ENCODE measurements at regions of chr12 and their contacts with region 1.

Region 1: GRCh38 chr12:128259556-128260070 is 7.4 kb upstream of the TMEM132C start:
- DNase-seq: peak in 1 of 2 experiments; percentile 72
- H3K4me3 ChIP-seq: no peak overlapping the region
- H3K27ac ChIP-seq: no peak overlapping the region
- H3K4me1 ChIP-seq: 0 out of 7 replicates have a peak, but pooled peaks cover 0 to 3% (median 0%) of the 10 kb centered on the region in 4 experiments
- H3K27me3 ChIP-seq: peaks cover 0 to 3% (median 0%) of the 10 kb centered on the region in 4 experiments; a peak in 3 of 7 replicates
- CTCF ChIP-seq: peak; percentile 34 to 80 (median 78)
- EP300 ChIP-seq: no peak
- POLR2A ChIP-seq: no peak
- RAD21 ChIP-seq: peak; percentile 94 to 96

Region 2: DNA sequence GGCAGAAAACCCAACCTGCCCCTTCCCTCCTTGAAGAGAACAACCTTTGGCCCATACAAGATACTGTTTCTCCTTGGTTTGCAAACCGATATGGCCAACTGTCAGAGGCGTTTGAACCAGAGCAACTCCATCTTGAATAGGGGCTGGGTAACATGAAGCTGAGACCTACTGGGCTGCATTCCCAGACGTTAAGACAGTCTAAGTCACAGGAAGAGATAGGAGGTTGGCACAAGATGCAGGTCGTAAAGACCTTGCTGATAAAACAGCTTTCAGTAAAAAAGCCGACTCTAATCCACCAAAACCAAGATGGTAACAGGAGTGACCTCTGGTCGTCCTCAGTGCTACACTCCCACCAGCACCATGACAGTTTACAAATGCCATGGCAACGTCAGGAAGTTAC is 35.4 kb before region 1 on chr12:
- CTCF ChIA-PET with region 1: interaction called, 11 read pairs
- POLR2A ChIA-PET with region 1: no interaction called
- DNase-seq: no peak
- H3K4me3 ChIP-seq: no peak overlapping the region
- H3K27ac ChIP-seq: no peak overlapping the region
- H3K4me1 ChIP-seq: 0 out of 7 replicates have a peak, but pooled peaks cover 0 to 3% (median 0%) of the 10 kb centered on the region in 4 experiments
- H3K27me3 ChIP-seq: no peaks in the 10 kb centered on the region
- CTCF ChIP-seq: no peak
- EP300 ChIP-seq: no peak
- POLR2A ChIP-seq: no peak
- RAD21 ChIP-seq: no peak

Region 3: GRCh38 chr12:128381541-128381940 is 121.9 kb after region 1 on chr12:
- CTCF ChIA-PET with region 1: interaction called, 86 read pairs
- POLR2A ChIA-PET with region 1: no interaction called
- DNase-seq: no peak
- H3K4me3 ChIP-seq: no peak overlapping the region
- H3K27ac ChIP-seq: no peak overlapping the region
- H3K4me1 ChIP-seq: peaks cover 0 to 3% (median 1%) of the 10 kb centered on the region in 4 experiments; a peak in 2 of 7 replicates
- H3K27me3 ChIP-seq: peaks cover 0 to 10% (median 6%) of the 10 kb centered on the region in 4 experiments; a peak in 4 of 7 replicates
- CTCF ChIP-seq: no peak
- EP300 ChIP-seq: no peak
- POLR2A ChIP-seq: no peak
- RAD21 ChIP-seq: no peak

Region 4: GRCh38 chr12:128393346-128393745 is 133.7 kb after region 1 on chr12:
- CTCF ChIA-PET with region 1: interaction called, 86 read pairs
- POLR2A ChIA-PET with region 1: no interaction called
- DNase-seq: no peak
- H3K4me3 ChIP-seq: no peak overlapping the region
- H3K27ac ChIP-seq: no peak overlapping the region
- H3K4me1 ChIP-seq: peaks cover 0 to 3% (median 0%) of the 10 kb centered on the region in 4 experiments; a peak in 1 of 7 replicates
- H3K27me3 ChIP-seq: no peaks in the 10 kb centered on the region
- CTCF ChIP-seq: no peak
- EP300 ChIP-seq: no peak
- POLR2A ChIP-seq: no peak
- RAD21 ChIP-seq: no peak

Region 5: GRCh38 chr12:128543460-128543859 is 283.8 kb after region 1 on chr12:
- CTCF ChIA-PET with region 1: interaction called, 20 read pairs
- POLR2A ChIA-PET with region 1: no interaction called
- DNase-seq: no peak
- H3K4me3 ChIP-seq: no peak overlapping the region
- H3K27ac ChIP-seq: no peak overlapping the region
- H3K4me1 ChIP-seq: no peaks in the 10 kb centered on the region
- H3K27me3 ChIP-seq: peaks cover 0 to 2% (median 0%) of the 10 kb centered on the region in 4 experiments; a peak in 1 of 7 replicates
- CTCF ChIP-seq: peak in 2 of 3 experiments; percentile 20 to 39; a peak in 3 of 4 replicates
- EP300 ChIP-seq: no peak
- POLR2A ChIP-seq: no peak
- RAD21 ChIP-seq: peak; percentile 64 to 68

Measured in H1 (cell line).